ENCODE measurements at regions of chr6 and their contacts with region 1.

Region 1: DNA sequence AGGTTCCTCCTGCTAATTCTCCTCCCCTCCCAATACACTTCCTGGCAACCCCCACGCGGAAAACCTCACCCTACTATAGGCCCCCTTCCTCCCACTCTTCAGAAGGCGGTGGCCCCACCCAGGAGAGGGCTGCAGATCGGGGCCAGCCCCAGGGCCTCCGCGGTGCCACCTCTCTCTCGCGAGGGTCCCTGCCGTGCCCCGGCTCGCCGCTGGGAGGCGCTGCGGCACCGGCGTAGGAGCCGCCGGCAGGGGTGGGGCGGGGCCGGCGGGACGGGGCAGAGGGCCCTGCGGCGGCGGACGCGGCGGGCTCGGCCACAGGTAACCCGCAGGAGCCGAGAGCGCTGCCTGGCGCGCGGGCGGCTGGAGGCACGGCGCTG is at the start of gene ANKRD6:
- DNase-seq: peak; percentile 40 to 89 (median 73)
- ATAC-seq: peak; percentile 94 to 98 (median 94)
- H3K4me3 ChIP-seq: peak within 1 kb of the TSS; percentile 61 to 68
- H3K4me3 Mint-ChIP-seq: peak within 1 kb of the TSS; percentile 82 to 88 (median 82)
- H3K27ac ChIP-seq: peak within 1 kb of the TSS; percentile 23
- H3K27ac Mint-ChIP-seq: peak within 1 kb of the TSS; percentile 75 to 80
- H3K4me1 ChIP-seq: peaks cover 4 to 15% of the 10 kb centered on the region in 2 experiments
- H3K4me1 Mint-ChIP-seq: peaks cover 18 to 28% (median 24%) of the 10 kb centered on the region in 3 donors
- H3K27me3 ChIP-seq: peaks cover 0 to 6% of the 10 kb centered on the region in 2 experiments
- H3K27me3 Mint-ChIP-seq: peaks cover 0 to 7% of the 10 kb centered on the region in 2 donors
- total RNA-seq, gene ANKRD6: 3.0 to 8.4 (median 5.3) TPM

Region 2: DNA sequence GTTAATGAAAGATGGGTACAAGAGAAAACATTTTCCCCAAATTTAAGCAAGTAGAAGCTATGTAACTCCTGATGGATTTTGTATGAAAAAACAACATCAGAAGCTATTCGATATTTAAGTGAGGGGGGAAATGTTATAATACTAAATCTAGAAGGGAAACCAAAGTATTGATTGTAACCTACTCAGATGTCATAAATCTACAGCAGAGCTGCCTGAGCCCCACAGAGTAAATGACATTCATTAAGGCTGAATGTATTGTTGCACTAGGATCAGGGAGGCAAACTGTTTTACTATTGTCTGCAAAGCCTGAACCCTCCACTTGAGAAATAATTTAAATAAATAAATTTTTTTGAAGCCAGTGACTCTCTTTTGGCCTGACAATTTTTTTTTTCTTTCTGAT is 19.4 kb after region 1 on chr6:
- CTCF ChIA-PET with region 1: no interaction called
- POLR2A ChIA-PET with region 1: no interaction called
- DNase-seq: no peak
- ATAC-seq: no peak
- H3K4me3 ChIP-seq: no peak overlapping the region
- H3K4me3 Mint-ChIP-seq: no peak overlapping the region
- H3K27ac ChIP-seq: no peak overlapping the region
- H3K27ac Mint-ChIP-seq: no peak overlapping the region
- H3K4me1 ChIP-seq: no peaks in the 10 kb centered on the region
- H3K4me1 Mint-ChIP-seq: no peaks in the 10 kb centered on the region
- H3K27me3 ChIP-seq: no peaks in the 10 kb centered on the region
- H3K27me3 Mint-ChIP-seq: no peaks in the 10 kb centered on the region

Region 3: GRCh38 chr6:89610149-89610642 is 177.3 kb after region 1 on chr6:
- CTCF ChIA-PET with region 1: interaction called, 13 to 19 read pairs
- POLR2A ChIA-PET with region 1: no interaction called
- DNase-seq: peak; percentile 29 to 81 (median 71)
- ATAC-seq: peak; percentile 60 to 79 (median 70)
- H3K4me3 ChIP-seq: no peak overlapping the region
- H3K4me3 Mint-ChIP-seq: no peak overlapping the region
- H3K27ac ChIP-seq: no peak overlapping the region
- H3K27ac Mint-ChIP-seq: no peak overlapping the region
- H3K4me1 ChIP-seq: no peaks in the 10 kb centered on the region
- H3K4me1 Mint-ChIP-seq: no peaks in the 10 kb centered on the region
- H3K27me3 ChIP-seq: no peaks in the 10 kb centered on the region
- H3K27me3 Mint-ChIP-seq: no peaks in the 10 kb centered on the region

Measured in T-cell (primary cell).